Heart left ventricle (tissue), 16 donors: ENCODE measurements at regions of chr3 and their contacts with region 1.

Region 1: DNA sequence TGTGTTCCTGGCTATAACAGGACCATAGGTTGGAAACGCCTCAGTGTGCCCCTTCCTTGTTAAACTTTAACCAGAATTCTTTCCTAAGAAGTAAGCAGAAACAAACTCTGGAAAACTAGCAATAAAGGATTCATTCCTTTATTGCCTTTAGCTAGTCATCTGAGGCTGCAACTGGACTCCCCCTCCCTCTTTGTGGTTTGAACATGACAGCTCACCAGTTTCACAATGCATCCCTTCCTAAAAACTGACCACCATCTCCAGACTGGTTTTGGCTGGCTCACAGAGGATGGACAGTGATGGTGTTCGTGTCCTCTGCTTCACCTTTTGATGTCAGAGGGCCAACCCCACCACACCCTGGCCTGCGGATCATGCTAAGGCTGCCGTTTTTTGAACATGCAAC is 27.9 kb upstream of the TGFBR2 start:
- DNase-seq: peak in 3 of 5 donors; percentile 31 to 53 (median 46)
- ATAC-seq: peak; percentile 60 to 67 (median 66)
- H3K4me3 ChIP-seq: no peak overlapping the region
- H3K27ac ChIP-seq: peak overlapping the region in 1 of 12 donors; percentile 28
- H3K4me1 ChIP-seq: peaks cover 0 to 16% (median 8%) of the 10 kb centered on the region in 12 donors
- H3K27me3 ChIP-seq: no peaks in the 10 kb centered on the region
- CTCF ChIP-seq: no peak
- POLR2A ChIP-seq: no peak

Region 2: GRCh38 chr3:30286007-30286669 is 292.3 kb before region 1 on chr3:
- intact Hi-C with region 1: no loop called
- DNase-seq: peak; percentile 60 to 86 (median 76)
- ATAC-seq: peak; percentile 83 to 95 (median 94)
- H3K4me3 ChIP-seq: no peak overlapping the region
- H3K27ac ChIP-seq: peak overlapping the region in 11 of 12 donors; percentile 2 to 81 (median 57)
- H3K4me1 ChIP-seq: peaks cover 0 to 62% (median 23%) of the 10 kb centered on the region in 12 donors
- H3K27me3 ChIP-seq: no peaks in the 10 kb centered on the region
- CTCF ChIP-seq: no peak
- POLR2A ChIP-seq: no peak

Region 3: DNA sequence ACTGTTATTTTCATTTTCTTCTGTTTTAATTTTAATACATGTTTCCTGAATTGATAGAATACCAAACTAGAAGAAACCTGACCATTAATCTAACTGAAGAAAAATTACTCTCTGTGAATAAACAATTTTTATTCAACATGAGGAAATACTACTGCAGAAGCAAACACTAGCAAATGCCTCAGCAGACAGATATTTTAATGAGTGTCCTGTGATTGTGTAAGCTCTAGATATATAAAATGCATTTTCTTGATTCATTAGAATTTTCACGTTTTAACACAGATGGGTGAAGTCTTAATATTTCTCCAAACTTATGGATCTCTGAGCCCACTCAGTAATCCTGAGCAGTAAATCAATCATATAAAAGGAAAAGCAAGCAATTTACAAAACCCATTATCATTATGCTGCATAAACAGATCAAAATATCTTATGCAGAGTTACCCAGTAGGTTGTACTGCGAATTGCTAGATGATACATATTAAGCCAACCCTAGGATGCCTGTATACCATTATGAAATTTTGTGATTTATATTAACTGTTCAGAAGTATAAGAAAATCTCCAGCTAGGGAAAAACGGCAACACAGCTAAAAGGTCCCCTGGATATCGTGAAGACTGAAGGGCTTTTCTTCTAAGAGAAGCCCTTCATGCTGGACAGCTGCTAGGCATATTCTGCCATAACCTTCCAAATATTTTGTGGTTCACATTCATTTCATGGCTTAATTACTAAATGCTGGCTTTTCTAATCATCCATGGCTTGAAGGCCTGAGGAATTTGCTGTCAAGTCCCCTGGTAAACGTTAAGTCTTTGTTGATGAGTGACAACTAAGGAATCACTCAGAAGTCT is 129.8 kb before region 1 on chr3:
- intact Hi-C with region 1: loop called in 1 of 10 experiments (anchors 5 kb)
- DNase-seq: no peak
- ATAC-seq: no peak
- H3K4me3 ChIP-seq: no peak overlapping the region
- H3K27ac ChIP-seq: peak overlapping the region in 1 of 12 donors; percentile 22
- H3K4me1 ChIP-seq: peaks cover 0 to 18% (median 9%) of the 10 kb centered on the region in 12 donors
- H3K27me3 ChIP-seq: no peaks in the 10 kb centered on the region
- CTCF ChIP-seq: no peak
- POLR2A ChIP-seq: no peak

Region 4: DNA sequence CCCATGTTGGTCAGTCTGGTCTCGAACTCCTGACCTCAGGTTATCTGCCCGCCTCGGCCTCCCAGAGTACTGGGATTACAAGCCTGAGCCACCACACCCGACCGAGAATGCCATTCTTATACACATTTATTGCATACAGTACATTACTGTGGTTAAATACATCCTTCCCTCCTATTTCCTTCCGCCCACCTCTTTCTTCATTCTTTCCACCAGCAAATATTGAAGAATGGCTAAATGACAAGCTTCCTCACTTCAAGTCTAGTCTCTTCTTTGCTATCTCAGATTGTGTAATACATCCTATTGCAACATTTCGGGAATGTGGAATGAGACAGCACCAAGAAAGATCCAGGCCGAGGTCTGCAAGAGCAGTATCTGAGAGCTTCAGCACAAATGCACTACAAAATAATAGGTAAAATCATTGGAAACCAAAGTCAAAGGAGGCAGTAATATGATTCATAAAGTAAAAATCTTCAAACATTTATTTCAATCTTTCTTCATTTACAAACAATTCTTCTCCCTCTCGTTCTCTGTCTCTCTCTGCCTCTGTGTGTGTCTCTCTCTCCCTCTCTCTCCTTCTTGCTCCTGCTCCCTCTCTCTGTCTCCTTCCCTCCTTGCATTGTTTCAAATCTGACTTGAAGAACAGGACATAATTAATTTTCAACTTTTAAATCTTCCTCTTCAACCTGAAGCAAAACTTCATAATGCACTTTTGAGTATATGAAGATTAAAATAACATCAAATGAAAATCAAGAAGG is 66.8 kb before region 1 on chr3:
- intact Hi-C with region 1: loop called in 1 of 10 experiments (anchors 10 kb)
- DNase-seq: peak in 1 of 5 donors; percentile 34
- ATAC-seq: peak; percentile 49 to 91 (median 83)
- H3K4me3 ChIP-seq: no peak overlapping the region
- H3K27ac ChIP-seq: peak overlapping the region; percentile 6 to 71 (median 49)
- H3K4me1 ChIP-seq: peaks cover 0 to 12% (median 3%) of the 10 kb centered on the region in 12 donors
- H3K27me3 ChIP-seq: no peaks in the 10 kb centered on the region
- CTCF ChIP-seq: no peak
- POLR2A ChIP-seq: no peak